ENCODE measurements at regions of chr6 and their contacts with region 1.

Region 1: DNA sequence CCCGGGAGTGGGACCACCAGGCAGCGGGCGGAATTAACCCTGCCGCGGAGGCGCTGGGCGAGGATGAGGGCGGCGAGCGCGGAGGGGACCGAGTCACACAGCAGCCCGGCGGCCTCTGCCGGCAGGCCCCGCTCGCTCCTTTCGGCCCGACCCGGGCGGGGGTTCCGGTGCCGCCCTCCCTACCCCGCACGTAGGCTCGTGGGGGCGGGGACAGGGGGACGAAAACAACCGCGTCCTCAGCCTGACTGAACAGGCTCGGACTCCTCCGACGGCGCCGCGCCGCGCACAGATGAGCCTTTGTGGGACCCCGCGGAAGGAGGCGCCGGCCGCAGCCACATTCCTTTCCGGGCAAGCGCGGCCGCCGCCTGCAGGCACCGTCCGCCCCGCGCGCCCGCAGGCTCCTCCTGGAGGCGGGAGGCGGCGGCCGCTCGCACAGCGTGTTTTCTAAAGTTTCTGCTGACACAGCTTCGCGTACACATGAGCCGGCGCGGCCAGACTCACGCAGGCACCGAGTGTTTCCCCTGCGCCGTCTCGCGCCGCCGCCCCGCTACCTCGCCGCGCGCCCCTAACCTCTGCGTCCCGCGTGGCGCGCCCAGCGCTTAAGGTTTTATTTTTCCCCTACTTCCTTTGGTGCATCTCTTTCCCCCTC is 244.3 kb downstream of the ARID1B start:
- DNase-seq: peak; percentile 93
- H3K4me3 Mint-ChIP-seq: peak overlapping the region; percentile 87
- H3K27ac Mint-ChIP-seq: peak overlapping the region; percentile 99
- H3K4me1 Mint-ChIP-seq: peaks cover 47% of the 10 kb centered on the region
- H3K27me3 Mint-ChIP-seq: no peaks in the 10 kb centered on the region

Region 2: GRCh38 chr6:156564127-156564806 is 457.2 kb before region 1 on chr6:
- CTCF ChIA-PET with region 1: no interaction called
- POLR2A ChIA-PET with region 1: no interaction called
- intact Hi-C with region 1: loop called (anchors 1 kb)
- DNase-seq: peak; percentile 87
- H3K4me3 Mint-ChIP-seq: no peak overlapping the region
- H3K27ac Mint-ChIP-seq: peak overlapping the region; percentile 13
- H3K4me1 Mint-ChIP-seq: no peaks in the 10 kb centered on the region
- H3K27me3 Mint-ChIP-seq: peaks cover 19% of the 10 kb centered on the region

Region 3: GRCh38 chr6:156686995-156687788 is 334.3 kb before region 1 on chr6:
- CTCF ChIA-PET with region 1: interaction called, 4 read pairs
- POLR2A ChIA-PET with region 1: interaction called, 4 read pairs
- intact Hi-C with region 1: loop called (anchors 2 kb)
- DNase-seq: peak; percentile 77
- H3K4me3 Mint-ChIP-seq: peak overlapping the region; percentile 77
- H3K27ac Mint-ChIP-seq: peak overlapping the region; percentile 73
- H3K4me1 Mint-ChIP-seq: peaks cover 24% of the 10 kb centered on the region
- H3K27me3 Mint-ChIP-seq: no peaks in the 10 kb centered on the region

Region 4: GRCh38 chr6:156963712-156964700 is 57.5 kb before region 1 on chr6:
- CTCF ChIA-PET with region 1: interaction called, 3 read pairs
- POLR2A ChIA-PET with region 1: interaction called, 15 read pairs
- intact Hi-C with region 1: loop called (anchors 2 kb)
- DNase-seq: peak; percentile 79
- H3K4me3 Mint-ChIP-seq: no peak overlapping the region
- H3K27ac Mint-ChIP-seq: no peak overlapping the region
- H3K4me1 Mint-ChIP-seq: peaks cover 54% of the 10 kb centered on the region
- H3K27me3 Mint-ChIP-seq: no peaks in the 10 kb centered on the region

Region 5: GRCh38 chr6:156976216-156977127 is 45.0 kb before region 1 on chr6:
- CTCF ChIA-PET with region 1: no interaction called
- POLR2A ChIA-PET with region 1: interaction called, 3 read pairs
- intact Hi-C with region 1: loop called (anchors 1 kb)
- DNase-seq: peak; percentile 48
- H3K4me3 Mint-ChIP-seq: peak overlapping the region; percentile 73
- H3K27ac Mint-ChIP-seq: peak overlapping the region; percentile 77
- H3K4me1 Mint-ChIP-seq: peaks cover 74% of the 10 kb centered on the region
- H3K27me3 Mint-ChIP-seq: no peaks in the 10 kb centered on the region

Region 6: GRCh38 chr6:157001716-157002115 is 19.8 kb before region 1 on chr6:
- CTCF ChIA-PET with region 1: no interaction called
- POLR2A ChIA-PET with region 1: no interaction called
- intact Hi-C with region 1: no loop called
- DNase-seq: no peak
- H3K4me3 Mint-ChIP-seq: no peak overlapping the region
- H3K27ac Mint-ChIP-seq: no peak overlapping the region
- H3K4me1 Mint-ChIP-seq: peaks cover 21% of the 10 kb centered on the region
- H3K27me3 Mint-ChIP-seq: no peaks in the 10 kb centered on the region

Region 7: GRCh38 chr6:157054531-157054979 is 33.1 kb after region 1 on chr6:
- CTCF ChIA-PET with region 1: no interaction called
- POLR2A ChIA-PET with region 1: interaction called, 13 read pairs
- intact Hi-C with region 1: loop called (anchors 2 kb)
- DNase-seq: peak; percentile 59
- H3K4me3 Mint-ChIP-seq: no peak overlapping the region
- H3K27ac Mint-ChIP-seq: peak overlapping the region; percentile 91
- H3K4me1 Mint-ChIP-seq: peaks cover 39% of the 10 kb centered on the region
- H3K27me3 Mint-ChIP-seq: no peaks in the 10 kb centered on the region

Region 8: DNA sequence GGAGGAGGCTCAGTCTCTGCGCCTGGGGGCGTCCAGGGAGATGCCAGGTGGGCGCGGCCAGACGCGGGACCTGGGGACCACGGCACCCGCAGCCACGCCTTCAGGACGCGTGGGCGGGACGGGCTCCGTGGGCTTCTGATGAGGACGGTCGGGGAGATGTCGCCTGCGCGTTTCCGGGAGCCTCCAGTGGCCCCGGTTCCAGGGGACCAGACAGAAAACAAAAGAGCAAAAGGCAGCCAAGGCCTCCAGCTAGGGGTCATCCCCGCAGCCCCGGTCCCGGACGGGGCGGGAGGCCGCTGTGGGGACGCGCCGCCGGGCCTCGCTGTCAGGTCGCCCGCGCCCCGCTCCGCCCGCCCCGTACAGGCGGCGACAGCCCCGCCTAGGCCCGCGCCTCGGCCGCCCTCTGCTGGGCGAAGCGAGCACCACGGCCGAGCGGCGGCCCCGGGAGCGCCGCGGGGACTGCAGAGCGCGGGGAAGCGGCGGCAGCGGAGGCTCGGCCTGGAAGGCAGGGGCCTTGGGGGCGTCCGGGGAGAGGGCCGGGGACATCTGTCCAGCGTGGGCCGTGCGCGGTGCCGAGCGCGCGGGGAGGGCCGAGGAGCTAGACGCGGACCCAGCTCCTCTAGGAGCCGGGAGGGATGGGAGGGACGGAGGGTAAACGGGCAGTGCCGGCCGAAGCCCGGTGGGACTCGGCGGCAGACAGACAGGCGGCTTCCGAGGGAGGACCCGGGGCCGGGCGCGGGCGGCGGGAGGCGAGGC is 253.2 kb after region 1 on chr6:
- CTCF ChIA-PET with region 1: no interaction called
- POLR2A ChIA-PET with region 1: interaction called, 4 read pairs
- intact Hi-C with region 1: loop called (anchors 5 kb)
- DNase-seq: peak; percentile 90
- H3K4me3 Mint-ChIP-seq: peak overlapping the region; percentile 76
- H3K27ac Mint-ChIP-seq: peak overlapping the region; percentile 89
- H3K4me1 Mint-ChIP-seq: peaks cover 5% of the 10 kb centered on the region
- H3K27me3 Mint-ChIP-seq: no peaks in the 10 kb centered on the region

Measured in activated CD4-positive, alpha-beta memory T cell treated with anti-CD3 and anti-CD28 coated beads for 36 hours (primary cell).